ENCODE measurements at regions of chr15 and their contacts with region 1.

Region 1: GRCh38 chr15:60695713-60696522 is 217.0 kb upstream of the ICE2 start:
- DNase-seq: peak; percentile 95
- H3K4me3 Mint-ChIP-seq: peak overlapping the region; percentile 57
- H3K27ac Mint-ChIP-seq: peak overlapping the region; percentile 80
- H3K4me1 Mint-ChIP-seq: peaks cover 84% of the 10 kb centered on the region
- H3K27me3 Mint-ChIP-seq: no peaks in the 10 kb centered on the region

Region 2: GRCh38 chr15:60397772-60398445 is 298.0 kb before region 1 on chr15 and contains the start of gene ANXA2:
- CTCF ChIA-PET with region 1: no interaction called
- POLR2A ChIA-PET with region 1: no interaction called
- intact Hi-C with region 1: loop called (anchors 10 kb)
- DNase-seq: peak; percentile 89
- H3K4me3 Mint-ChIP-seq: peak within 1 kb of the TSS; percentile 93
- H3K27ac Mint-ChIP-seq: peak within 1 kb of the TSS; percentile 91
- H3K4me1 Mint-ChIP-seq: peaks cover 45% of the 10 kb centered on the region
- H3K27me3 Mint-ChIP-seq: peaks cover 2% of the 10 kb centered on the region
- total RNA-seq, gene ANXA2: 131 to 132 TPM

Region 3: GRCh38 chr15:60568301-60568742 is 127.6 kb before region 1 on chr15:
- CTCF ChIA-PET with region 1: no interaction called
- POLR2A ChIA-PET with region 1: no interaction called
- intact Hi-C with region 1: no loop called
- DNase-seq: no peak
- H3K4me3 Mint-ChIP-seq: peak overlapping the region; percentile 35
- H3K27ac Mint-ChIP-seq: peak overlapping the region; percentile 85
- H3K4me1 Mint-ChIP-seq: peaks cover 91% of the 10 kb centered on the region
- H3K27me3 Mint-ChIP-seq: no peaks in the 10 kb centered on the region

Region 4: GRCh38 chr15:60649845-60650548 is 45.9 kb before region 1 on chr15:
- CTCF ChIA-PET with region 1: interaction called, 4 read pairs
- POLR2A ChIA-PET with region 1: interaction called, 28 read pairs
- intact Hi-C with region 1: loop called (anchors 1 kb)
- DNase-seq: peak; percentile 68
- H3K4me3 Mint-ChIP-seq: peak overlapping the region; percentile 54
- H3K27ac Mint-ChIP-seq: peak overlapping the region; percentile 87
- H3K4me1 Mint-ChIP-seq: peaks cover 58% of the 10 kb centered on the region
- H3K27me3 Mint-ChIP-seq: no peaks in the 10 kb centered on the region

Region 5: DNA sequence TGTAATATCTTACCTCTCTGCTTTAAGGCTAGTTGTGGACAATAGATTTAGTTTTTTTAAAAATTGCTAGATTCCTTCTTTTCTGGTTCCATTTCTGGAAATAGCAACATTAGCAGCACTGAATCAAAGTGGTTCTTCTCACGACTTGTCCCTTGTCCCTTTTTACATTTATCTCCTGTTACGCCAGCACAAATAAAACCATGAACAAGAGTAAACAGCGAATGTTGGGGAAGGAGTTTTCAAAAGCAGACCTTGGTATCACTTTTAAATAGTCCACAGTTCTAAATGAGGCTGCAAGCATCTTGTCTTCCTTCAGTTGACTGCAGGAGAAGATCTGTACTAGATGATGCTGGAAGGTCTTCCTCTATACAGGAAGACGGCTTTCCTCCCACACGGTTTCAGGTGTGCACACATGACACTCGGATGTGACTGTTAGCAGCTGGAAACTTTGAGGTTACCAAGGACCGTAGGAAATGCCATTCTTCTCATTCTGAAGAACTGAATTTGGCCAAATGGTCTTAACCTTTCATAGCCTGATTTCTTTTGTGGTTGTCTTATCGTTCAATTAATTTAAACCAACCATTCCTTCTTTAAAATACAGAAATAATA is 34.0 kb after region 1 on chr15:
- CTCF ChIA-PET with region 1: no interaction called
- POLR2A ChIA-PET with region 1: no interaction called
- intact Hi-C with region 1: loop called (anchors 5 kb)
- DNase-seq: peak; percentile 74
- H3K4me3 Mint-ChIP-seq: peak overlapping the region; percentile 61
- H3K27ac Mint-ChIP-seq: peak overlapping the region; percentile 60
- H3K4me1 Mint-ChIP-seq: peaks cover 51% of the 10 kb centered on the region
- H3K27me3 Mint-ChIP-seq: no peaks in the 10 kb centered on the region

Region 6: GRCh38 chr15:60767134-60767824 is 71.4 kb after region 1 on chr15:
- CTCF ChIA-PET with region 1: no interaction called
- POLR2A ChIA-PET with region 1: no interaction called
- intact Hi-C with region 1: no loop called
- DNase-seq: no peak
- H3K4me3 Mint-ChIP-seq: no peak overlapping the region
- H3K27ac Mint-ChIP-seq: no peak overlapping the region
- H3K4me1 Mint-ChIP-seq: peaks cover 46% of the 10 kb centered on the region
- H3K27me3 Mint-ChIP-seq: no peaks in the 10 kb centered on the region

Measured in activated CD4-positive, alpha-beta memory T cell treated with anti-CD3 and anti-CD28 coated beads for 36 hours (primary cell).